GM10248 (cell line): ENCODE measurements at regions of chr6 and their contacts with region 1.

Region 1: GRCh38 chr6:37018198-37019064 is 13.0 kb downstream of the FGD2 start:
- DNase-seq: peak; percentile 89
- CTCF ChIP-seq: peak; percentile 93

Region 2: GRCh38 chr6:36563237-36563927 is 455.0 kb before region 1 on chr6:
- CTCF ChIA-PET with region 1: no interaction called
- POLR2A ChIA-PET with region 1: no interaction called
- DNase-seq: no peak
- CTCF ChIP-seq: no peak

Region 3: DNA sequence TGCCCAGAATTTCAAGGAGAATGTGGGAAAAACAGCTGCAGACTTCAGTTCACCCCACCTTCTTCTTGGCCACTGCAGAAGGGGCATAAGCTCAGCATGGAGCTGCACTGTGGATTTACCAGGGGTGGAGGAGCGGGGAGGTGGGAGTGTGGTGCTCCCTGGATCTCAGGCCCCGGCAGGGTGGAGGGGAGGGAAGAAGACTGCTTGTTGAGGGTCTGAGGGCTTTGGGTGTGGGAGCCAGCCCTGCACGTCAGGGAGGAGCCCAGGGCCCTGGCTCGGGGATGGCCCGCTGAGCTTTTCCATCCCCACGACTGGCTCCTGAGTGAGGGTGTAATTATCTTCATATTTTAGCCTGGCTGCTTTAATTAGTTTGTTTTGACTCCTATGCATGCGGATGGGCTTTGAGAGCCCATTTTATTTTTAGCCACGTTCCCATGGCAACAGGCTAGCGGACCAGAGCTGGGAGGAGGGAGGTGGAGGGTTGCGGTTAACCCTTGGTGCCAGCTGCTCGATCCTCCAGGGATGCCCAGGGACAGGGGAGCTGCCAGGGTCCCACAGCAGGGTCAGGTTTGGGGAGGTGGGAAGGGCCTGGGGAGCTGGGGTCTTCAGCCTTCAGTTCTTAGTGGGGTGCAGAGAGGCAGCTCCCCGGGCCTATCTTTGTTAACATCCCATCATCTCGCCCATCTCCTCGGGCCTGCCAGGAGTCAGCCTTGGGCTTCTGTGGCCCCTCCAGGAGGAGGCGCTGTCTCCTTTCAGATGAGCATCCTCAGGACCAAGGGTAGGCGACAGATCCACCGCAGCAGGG is 252.6 kb before region 1 on chr6:
- CTCF ChIA-PET with region 1: interaction called, 168 read pairs
- POLR2A ChIA-PET with region 1: no interaction called
- DNase-seq: peak; percentile 90
- CTCF ChIP-seq: peak; percentile 98

Region 4: DNA sequence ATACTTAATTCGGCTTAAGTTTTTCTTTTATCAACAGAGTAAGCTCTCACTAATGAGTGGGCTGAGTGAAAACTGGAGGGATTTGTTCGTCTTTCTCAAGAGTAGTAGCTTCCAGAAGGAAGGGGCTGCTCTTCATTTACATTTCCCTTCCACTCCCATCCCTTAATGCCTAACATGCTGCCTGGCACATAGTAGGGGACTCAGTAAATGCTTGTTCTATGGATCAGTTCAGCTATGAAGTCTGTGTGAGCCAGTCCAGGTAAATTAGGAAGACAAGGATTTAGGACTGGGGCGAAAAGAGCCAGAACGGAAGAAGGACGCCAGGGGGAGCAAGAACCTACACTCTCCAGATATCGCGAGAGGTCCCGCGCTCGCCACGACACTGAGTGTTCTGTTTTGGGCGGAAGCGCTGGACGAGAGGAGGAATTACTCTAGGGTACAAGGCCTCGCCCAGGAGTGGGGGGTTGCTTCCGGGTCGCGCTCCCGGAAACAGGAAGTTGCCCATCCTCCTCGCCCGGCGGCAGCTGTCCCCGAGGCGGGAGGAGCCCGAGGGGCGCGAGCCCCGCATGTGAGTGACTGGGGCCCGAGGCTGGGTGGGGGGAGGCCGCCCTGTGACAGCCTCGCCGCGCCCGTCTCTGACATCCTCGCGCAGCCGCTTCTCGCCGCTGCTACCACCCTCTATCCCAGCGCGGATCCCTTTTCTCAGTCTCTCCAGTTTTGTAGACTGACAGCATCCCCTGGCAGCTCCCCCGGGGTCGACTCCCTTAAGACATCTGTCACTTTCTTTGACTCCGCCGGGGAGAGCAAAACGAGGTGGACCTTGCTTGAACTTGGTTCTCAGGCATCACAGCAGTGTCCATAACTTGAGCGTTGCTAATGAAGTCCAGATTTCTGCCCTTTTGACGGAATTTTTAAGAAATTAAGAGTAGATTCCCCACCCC is 132.7 kb before region 1 on chr6 and contains the start of gene C6orf89:
- CTCF ChIA-PET with region 1: interaction called, 43 read pairs
- POLR2A ChIA-PET with region 1: no interaction called
- DNase-seq: peak; percentile 94
- CTCF ChIP-seq: peak; percentile 68

Region 5: DNA sequence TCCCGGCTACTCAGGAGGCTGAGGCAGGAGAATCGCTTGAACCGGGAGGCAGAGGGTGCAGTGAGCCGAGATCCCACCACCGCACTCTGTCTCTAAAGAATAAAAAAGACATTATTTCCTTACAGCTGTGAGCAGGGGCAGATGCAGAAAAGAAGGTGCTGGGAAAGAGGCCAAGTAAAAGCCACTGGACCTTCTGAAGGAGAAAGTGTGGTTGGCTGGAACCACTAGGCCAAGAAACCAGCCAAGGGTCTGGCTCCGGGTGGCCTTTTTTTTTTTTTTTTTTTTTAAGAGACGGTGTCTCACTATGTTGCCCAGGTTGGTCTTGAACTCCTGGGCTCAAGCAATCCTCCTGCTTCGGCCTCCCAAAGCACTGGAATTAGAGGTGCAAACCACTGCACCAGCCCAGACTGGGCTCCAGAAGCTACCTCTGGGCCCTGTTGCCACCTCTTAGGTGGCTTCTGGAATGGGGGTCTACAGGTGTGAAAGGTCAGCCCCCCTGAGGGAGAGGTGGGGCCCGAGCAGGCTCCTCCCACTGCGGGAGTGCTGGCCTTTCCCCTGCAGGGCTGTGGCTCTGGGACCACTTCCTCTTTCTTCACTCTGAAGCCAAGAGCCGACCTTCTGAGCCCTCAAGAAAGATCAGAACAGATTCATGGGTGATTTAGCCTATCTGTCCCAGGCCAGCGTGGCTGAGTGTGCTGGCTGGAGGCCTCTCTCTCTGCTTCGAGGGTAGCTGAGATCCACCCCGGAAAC is 13.2 kb before region 1 on chr6 and contains the start of gene FGD2:
- CTCF ChIA-PET with region 1: interaction called, 147 read pairs
- POLR2A ChIA-PET with region 1: no interaction called
- DNase-seq: peak; percentile 92
- CTCF ChIP-seq: no peak

Region 6: GRCh38 chr6:37169496-37170272 is 151.3 kb after region 1 on chr6 and contains the start of gene PIM1:
- CTCF ChIA-PET with region 1: interaction called, 519 read pairs
- POLR2A ChIA-PET with region 1: interaction called, 3 read pairs
- DNase-seq: peak; percentile 98
- CTCF ChIP-seq: no peak

Region 7: GRCh38 chr6:37222125-37222967 is 203.9 kb after region 1 on chr6:
- CTCF ChIA-PET with region 1: interaction called, 774 read pairs
- POLR2A ChIA-PET with region 1: no interaction called
- DNase-seq: peak; percentile 89
- CTCF ChIP-seq: no peak